Posterior cingulate gyrus (tissue), 11 donors: ENCODE measurements at regions of chr1 and their contacts with region 1.

Region 1: GRCh38 chr1:29235955-29236684 is at the start of gene PTPRU:
- DNase-seq: peak; percentile 62 to 97 (median 79)

Region 2: GRCh38 chr1:29341936-29342335 is 105.8 kb after region 1 on chr1:
- intact Hi-C with region 1: no loop called
- DNase-seq: peak in 2 of 10 donors; percentile 31 to 67

Region 3: GRCh38 chr1:29603622-29604021 is 367.5 kb after region 1 on chr1:
- intact Hi-C with region 1: no loop called
- DNase-seq: no peak

Region 4: DNA sequence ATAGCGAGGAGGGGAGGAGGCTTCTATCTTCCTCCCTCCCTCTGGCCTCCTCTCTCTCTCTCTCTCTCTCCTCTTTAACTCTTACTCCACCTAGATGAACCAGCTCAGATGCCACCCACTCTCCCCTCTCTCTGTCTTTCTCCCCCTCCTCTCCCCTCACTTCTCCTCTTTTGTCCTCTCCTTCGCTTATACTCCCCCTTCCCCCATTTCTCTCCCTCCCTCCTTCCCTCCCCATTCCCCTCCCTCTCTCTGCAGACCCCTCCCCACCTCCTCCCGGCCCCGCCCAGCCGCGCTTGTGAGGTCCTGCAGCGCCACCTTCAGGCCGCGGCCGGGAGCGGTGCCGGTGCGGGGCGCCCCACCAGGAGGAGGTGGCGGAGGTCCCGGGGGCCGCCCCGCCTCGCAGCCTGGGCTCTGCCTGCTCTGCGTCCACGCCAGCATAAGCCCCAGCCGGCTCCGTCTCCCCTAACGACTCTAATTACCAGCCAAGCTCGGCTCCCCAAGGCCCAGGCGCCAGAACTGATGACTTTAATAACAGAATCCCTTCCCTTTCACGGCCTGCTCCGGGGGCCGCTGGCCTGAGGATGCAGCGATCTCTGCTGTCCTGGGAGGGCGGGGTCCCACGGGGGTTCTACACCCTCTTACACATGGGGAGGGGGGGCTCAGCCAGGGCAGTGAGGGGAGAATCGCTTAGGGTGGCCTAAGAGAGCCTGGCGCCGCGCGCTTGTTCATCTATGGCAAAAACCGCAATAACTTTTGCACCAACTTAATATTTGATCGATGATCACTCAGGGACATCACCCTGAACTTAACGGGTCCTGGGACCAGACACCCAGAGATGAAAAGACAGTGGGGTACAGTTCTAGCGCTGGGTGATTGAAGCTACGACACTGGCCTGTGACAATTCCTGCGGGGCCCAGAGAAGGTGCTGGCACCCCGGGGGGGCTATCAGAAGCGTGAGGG is 850.0 kb after region 1 on chr1:
- intact Hi-C with region 1: loop called (anchors 5 kb)
- DNase-seq: peak; percentile 33 to 93 (median 58)

Region 5: GRCh38 chr1:30111431-30111830 is 875.3 kb after region 1 on chr1:
- intact Hi-C with region 1: loop called (anchors 2 kb)
- DNase-seq: peak; percentile 34 to 95 (median 62)

Region 6: GRCh38 chr1:30379684-30380624 is 1143.8 kb after region 1 on chr1:
- intact Hi-C with region 1: loop called (anchors 5 kb)
- DNase-seq: peak in 7 of 10 donors; percentile 27 to 91 (median 54)

Region 7: GRCh38 chr1:30707412-30708360 is 1471.6 kb after region 1 on chr1:
- intact Hi-C with region 1: loop called (anchors 2 kb)
- DNase-seq: peak; percentile 73 to 99 (median 88)